ENCODE measurements at regions of chr16 and their contacts with region 1.

Region 1: DNA sequence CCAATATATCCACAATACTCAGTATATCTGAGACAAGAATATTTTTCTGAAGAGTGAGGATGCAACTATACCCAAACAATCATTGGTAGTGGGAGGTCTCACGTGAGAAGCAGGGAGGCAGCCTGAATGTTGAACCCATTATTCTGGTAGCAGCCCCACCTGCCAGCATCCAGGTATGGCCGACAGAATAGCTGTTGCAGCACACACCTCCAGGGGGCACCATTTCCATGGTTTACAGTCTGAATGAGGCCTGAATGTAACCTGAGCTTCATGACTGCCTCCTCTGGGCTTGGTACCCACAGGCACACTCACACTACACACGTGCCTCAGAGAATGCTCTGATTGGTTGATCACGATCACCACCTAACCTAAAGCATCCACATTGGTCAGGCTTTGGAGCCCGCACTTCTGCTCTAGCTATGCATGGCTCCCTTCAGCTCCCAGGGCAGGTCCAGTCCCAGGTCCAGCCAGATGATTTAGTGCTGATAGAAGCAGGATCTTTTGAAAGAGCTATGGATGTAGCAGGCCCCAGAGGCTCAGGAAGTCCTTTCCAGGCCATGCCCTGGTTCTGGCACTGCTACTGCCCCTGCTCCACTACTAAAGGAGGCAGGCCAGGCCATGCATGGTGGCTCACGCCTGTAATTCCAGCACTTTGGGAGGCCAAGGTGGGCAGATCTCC is 11.0 kb upstream of the CBFB start:
- DNase-seq: peak; percentile 94
- H3K4me3 Mint-ChIP-seq: no peak overlapping the region
- H3K27ac Mint-ChIP-seq: peak overlapping the region; percentile 64
- H3K4me1 Mint-ChIP-seq: peaks cover 50% of the 10 kb centered on the region
- H3K27me3 Mint-ChIP-seq: peaks cover 20% of the 10 kb centered on the region

Region 2: GRCh38 chr16:66786551-66786950 is 231.4 kb before region 1 on chr16:
- CTCF ChIA-PET with region 1: no interaction called
- DNase-seq: no peak
- H3K4me3 Mint-ChIP-seq: no peak overlapping the region
- H3K27ac Mint-ChIP-seq: no peak overlapping the region
- H3K4me1 Mint-ChIP-seq: no peaks in the 10 kb centered on the region
- H3K27me3 Mint-ChIP-seq: peaks cover 9% of the 10 kb centered on the region

Region 3: GRCh38 chr16:66830422-66831404 is 187.2 kb before region 1 on chr16 and contains the start of gene NAE1:
- CTCF ChIA-PET with region 1: no interaction called
- DNase-seq: peak; percentile 89
- H3K4me3 Mint-ChIP-seq: peak within 1 kb of the TSS; percentile 71
- H3K27ac Mint-ChIP-seq: peak within 1 kb of the TSS; percentile 78
- H3K4me1 Mint-ChIP-seq: peaks cover 36% of the 10 kb centered on the region
- H3K27me3 Mint-ChIP-seq: peaks cover 4% of the 10 kb centered on the region

Region 4: DNA sequence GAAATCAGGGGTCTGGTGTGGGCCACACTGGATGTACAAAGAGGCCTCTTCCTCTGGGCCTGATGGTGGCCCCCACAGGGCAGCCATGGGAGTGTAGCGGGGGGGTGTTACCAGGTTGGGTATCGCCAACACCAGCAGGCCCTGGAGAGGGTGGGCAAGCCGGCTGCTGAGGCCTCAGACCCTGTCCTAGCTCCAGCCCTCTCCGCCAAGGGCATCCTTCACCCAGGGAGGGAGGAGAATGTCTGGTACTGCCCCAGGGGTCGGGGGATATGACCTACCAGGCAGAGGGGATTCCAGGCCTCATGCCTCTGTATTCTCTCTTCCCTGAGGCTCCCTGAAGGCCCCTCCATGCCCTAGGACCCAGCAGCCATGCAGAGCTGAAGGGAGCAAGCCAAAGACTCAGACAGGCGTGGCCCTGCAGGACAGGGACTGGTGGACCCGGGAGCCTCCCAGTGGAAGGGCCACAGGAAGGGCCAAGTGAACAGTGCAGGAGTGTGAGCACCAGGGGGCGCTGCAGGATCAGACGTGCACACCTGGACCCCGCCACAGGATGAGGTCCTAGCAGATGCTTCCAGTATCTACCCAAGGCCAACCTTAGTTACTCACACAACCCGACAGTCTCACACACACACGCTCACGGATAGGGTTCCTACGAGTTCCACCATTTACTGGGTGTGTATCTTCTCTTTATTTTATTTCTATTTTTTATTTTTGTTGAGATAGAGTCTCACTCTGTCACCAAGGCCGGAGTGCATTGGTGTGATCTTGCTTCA is 40.4 kb before region 1 on chr16:
- CTCF ChIA-PET with region 1: interaction called, 65 read pairs
- DNase-seq: peak; percentile 94
- H3K4me3 Mint-ChIP-seq: no peak overlapping the region
- H3K27ac Mint-ChIP-seq: peak overlapping the region; percentile 69
- H3K4me1 Mint-ChIP-seq: peaks cover 66% of the 10 kb centered on the region
- H3K27me3 Mint-ChIP-seq: peaks cover 5% of the 10 kb centered on the region

Region 5: DNA sequence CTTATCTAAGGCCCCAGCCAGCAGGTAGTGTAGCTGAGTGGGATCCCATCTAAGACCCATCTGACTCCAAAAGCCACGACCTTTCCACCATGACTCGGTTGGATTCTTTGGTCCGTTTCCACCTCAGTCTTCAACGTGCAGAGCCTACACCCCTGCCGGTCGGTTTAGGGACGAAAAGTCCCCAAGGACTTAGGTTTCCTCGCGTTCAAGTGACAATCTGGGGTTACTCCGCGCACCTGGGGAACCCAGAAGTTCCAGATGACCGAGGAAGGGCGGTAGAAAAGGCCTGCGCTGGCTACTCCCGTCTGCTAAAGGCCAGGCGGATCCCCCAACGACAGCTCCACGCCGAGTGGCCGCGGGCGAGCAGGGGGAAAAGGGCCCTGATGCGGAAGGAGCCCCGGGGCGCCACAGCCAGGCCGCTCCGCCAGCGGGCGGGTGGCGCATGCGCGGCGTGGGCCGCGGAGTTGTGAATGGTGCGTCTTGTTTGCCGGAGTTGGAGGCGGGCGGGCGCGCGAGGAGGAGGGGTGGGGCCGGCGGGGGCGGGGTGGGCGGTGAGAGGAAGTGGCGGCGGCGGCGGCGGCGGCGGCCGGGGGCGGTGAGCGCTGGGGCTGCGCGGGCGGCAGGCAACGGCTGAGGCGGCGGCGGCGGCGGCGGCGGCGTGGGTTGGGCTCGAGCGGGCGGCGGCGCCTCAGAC is 10.8 kb after region 1 on chr16 and contains the start of gene CBFB:
- CTCF ChIA-PET with region 1: interaction called, 52 read pairs
- DNase-seq: peak; percentile 94
- H3K4me3 Mint-ChIP-seq: peak within 1 kb of the TSS; percentile 91
- H3K27ac Mint-ChIP-seq: peak within 1 kb of the TSS; percentile 92
- H3K4me1 Mint-ChIP-seq: peaks cover 70% of the 10 kb centered on the region
- H3K27me3 Mint-ChIP-seq: no peaks in the 10 kb centered on the region

Region 6: DNA sequence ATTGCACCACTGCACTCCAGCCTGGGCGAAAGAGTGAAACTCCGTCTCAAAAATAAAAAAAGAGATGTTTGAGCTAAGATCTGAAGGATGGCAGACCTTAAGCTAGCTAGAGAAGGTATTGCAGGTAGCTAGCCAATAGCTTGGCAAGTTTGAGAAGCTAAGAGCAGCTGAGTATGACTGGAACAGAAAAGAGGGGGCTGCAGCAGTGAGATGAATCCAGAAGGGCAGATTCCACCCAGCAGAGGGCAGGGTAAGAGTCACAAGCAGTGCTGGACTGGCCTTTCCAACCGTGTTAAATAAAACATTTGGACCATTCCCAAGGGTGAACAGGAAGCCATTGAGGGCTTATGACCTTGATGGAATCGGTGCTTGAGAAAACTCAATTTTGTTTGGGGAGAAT is 86.1 kb after region 1 on chr16:
- CTCF ChIA-PET with region 1: interaction called, 48 read pairs
- DNase-seq: no peak
- H3K4me3 Mint-ChIP-seq: no peak overlapping the region
- H3K27ac Mint-ChIP-seq: no peak overlapping the region
- H3K4me1 Mint-ChIP-seq: no peaks in the 10 kb centered on the region
- H3K27me3 Mint-ChIP-seq: no peaks in the 10 kb centered on the region

Region 7: DNA sequence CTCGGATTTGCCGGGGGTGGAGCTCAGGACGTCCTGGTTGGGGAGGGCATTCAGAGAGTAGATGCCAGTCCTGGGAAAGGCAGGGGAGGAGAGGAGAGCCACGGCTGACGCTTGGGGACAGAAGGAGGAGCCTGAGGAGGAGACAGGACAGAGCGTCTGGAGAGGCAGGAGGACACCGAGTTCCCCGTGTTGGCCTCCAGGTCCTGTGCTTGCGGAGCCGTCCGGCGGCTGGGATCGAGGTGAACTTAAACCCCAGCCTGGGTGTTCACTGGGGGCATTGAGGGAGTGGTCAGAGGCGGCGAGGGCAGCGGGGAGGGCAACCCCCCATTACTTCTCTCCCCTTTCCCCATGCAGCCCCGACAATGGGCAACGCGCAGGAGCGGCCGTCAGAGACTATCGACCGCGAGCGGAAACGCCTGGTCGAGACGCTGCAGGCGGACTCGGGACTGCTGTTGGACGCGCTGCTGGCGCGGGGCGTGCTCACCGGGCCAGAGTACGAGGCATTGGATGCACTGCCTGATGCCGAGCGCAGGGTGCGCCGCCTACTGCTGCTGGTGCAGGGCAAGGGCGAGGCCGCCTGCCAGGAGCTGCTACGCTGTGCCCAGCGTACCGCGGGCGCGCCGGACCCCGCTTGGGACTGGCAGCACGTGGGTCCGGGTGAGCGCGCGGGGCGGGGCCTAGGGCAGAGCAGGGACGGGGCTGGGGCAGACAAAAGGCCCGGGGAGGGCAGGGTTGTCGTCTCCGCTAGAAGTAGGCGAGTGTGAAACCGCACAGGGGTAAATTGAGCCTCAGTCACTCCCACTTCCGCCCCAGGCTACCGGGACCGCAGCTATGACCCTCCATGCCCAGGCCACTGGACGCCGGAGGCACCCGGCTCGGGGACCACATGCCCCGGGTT is 156.1 kb after region 1 on chr16:
- CTCF ChIA-PET with region 1: interaction called, 23 read pairs
- DNase-seq: peak; percentile 86
- H3K4me3 Mint-ChIP-seq: peak overlapping the region; percentile 74
- H3K27ac Mint-ChIP-seq: no peak overlapping the region
- H3K4me1 Mint-ChIP-seq: peaks cover 67% of the 10 kb centered on the region
- H3K27me3 Mint-ChIP-seq: peaks cover 100% of the 10 kb centered on the region

Region 8: DNA sequence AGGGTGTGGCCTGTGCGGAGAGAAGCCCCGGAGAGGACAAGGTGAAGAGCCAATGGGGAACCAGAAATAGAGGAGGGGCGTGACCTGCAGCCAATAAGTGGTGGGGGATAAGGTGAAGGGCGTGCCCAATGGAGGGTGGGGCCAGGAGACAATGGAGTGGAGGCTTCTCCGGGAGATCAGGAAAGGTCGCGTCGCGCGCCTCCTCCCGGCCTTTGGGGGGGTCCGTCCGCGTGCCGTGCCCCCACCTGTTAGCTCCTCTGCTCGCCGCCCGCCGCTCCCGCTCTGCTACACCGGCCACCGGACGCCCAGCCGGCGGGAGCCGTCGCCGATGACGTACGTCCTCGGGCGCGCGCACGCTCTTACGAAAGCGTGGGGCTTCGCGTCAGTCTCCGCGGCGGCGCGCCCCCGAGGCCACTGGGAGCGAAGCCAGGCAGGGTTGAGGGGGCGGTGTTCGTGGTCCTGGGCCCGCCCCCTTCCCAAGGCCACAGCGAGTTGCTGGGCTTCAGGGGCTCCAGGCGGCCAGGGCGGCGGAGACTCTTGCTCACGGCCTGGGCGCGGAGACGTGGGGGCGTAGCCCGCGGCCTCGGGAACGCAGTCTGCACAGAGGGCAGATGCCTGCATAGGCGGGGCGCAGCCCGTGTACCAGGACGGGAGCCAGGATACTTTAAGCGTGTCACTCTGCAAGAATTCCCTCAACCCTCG is 165.8 kb after region 1 on chr16 and contains the start of gene MATCAP1:
- CTCF ChIA-PET with region 1: interaction called, 43 read pairs
- DNase-seq: peak; percentile 98
- H3K4me3 Mint-ChIP-seq: no peak within 1 kb of the TSS
- H3K27ac Mint-ChIP-seq: no peak within 1 kb of the TSS
- H3K4me1 Mint-ChIP-seq: peaks cover 25% of the 10 kb centered on the region
- H3K27me3 Mint-ChIP-seq: peaks cover 39% of the 10 kb centered on the region

Region 9: DNA sequence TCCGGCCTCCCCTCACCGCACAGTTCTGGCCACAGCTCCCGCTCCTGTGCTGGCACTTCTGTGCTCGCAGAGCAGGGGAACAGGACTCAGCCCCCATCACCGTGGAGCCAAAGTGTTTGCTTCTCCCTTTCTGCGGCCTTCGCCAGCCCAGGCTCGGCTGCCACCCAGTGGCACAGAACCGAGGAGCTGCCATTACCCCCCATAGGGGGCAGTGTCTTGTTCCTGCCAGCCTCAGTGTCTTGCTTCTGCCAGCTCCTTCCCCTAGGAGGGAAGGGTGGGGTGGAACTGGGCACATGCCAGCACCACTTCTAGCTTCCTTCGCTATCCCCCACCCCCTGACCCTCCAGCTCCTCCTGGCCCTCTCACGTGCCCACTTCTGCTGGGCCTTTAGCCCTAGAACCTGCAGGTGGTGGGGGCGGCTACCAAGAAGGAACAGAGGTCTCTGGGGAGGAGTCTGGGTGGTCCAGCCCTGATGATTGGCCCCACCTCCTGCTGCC is 180.3 kb after region 1 on chr16:
- CTCF ChIA-PET with region 1: no interaction called
- DNase-seq: peak; percentile 52
- H3K4me3 Mint-ChIP-seq: no peak overlapping the region
- H3K27ac Mint-ChIP-seq: peak overlapping the region; percentile 37
- H3K4me1 Mint-ChIP-seq: peaks cover 31% of the 10 kb centered on the region
- H3K27me3 Mint-ChIP-seq: no peaks in the 10 kb centered on the region

Measured in activated naive CD4-positive, alpha-beta T cell treated with anti-CD3 and anti-CD28 coated beads, Interleukin-2, amount 10 ng/mL, durations not matched to agents 7 days and 5 days (primary cell).